Adrenal gland (tissue), 19 donors: ENCODE measurements at regions of chr12 and their contacts with region 1.

Region 1: DNA sequence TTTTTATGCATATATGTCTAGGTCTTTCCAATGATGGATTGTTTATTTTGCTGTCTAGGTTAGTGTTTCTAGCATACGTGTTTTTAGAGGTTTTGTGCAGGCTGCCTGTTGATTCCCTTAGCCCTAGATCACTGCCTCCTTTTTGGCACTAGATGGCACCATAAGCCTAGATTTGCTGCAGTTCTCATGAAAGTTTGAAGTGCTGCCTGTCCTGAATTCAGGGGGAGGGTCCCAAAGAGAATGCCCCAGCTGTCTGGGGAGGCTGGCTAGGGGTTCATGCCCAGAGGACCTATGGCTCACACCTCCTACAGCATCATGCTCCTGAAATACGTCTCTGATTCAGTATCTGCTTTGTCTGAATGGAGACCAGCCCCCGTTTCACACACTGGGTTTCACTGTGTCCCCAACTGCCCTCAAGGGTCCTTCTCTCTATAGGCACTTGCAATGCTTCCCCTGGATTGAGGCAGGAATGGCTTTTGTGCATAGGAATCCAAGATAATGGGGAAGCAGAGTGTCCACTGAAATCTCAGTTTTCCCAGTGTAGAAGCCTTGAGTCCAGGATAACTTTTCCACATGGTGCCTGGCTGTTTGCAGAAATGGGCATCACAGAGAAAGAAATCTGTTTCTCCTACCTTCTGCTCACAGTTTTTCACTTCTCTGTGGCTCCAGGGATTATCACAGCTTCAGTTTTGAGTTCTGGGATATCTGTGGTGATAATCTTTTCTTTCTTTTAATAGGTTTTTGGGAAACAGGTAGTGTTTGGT is 14.2 kb upstream of the TXNRD1 start:
- DNase-seq: peak in 6 of 7 donors; percentile 40 to 69 (median 50)
- H3K4me3 ChIP-seq: no peak overlapping the region
- H3K27ac ChIP-seq: no peak overlapping the region
- H3K4me1 ChIP-seq: no peaks in the 10 kb centered on the region
- H3K27me3 ChIP-seq: no peaks in the 10 kb centered on the region
- CTCF ChIP-seq: peak; percentile 37 to 93 (median 84)
- POLR2A ChIP-seq: no peak

Region 2: DNA sequence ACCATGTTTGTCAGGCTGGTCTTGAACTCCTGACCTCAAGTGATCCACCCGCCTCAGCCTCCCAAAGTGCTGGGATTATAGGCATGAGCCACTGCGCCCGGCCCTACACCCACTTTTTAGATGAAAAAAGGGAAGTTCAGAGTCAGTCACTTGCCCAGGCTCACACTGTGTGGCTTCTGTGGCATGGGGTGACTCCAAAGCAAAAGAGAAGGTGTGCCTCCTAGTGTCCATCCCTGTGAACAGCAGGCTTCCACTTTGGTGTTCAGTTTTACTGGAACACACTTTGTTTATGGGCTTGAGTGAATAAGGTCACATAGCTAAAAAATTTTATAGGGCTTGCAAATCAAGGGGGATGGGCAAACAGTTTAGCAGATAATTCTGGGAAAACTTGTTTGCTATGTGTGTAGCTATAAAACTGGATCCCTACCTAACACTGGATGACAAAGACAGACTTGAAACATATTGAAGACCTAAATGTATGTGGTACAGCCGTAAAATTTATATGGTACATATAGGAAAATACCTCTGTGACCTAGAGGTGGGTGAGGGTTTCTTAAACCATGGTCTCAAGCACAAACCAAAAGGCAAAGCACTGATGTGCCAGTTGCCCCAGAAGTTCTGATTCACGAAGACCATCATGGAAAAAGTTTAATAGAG is 157.1 kb after region 1 on chr12:
- intact Hi-C with region 1: loop called in 1 of 2 experiments (anchors 5 kb)
- DNase-seq: peak; percentile 61 to 89 (median 69)
- H3K4me3 ChIP-seq: no peak overlapping the region
- H3K27ac ChIP-seq: no peak overlapping the region
- H3K4me1 ChIP-seq: no peaks in the 10 kb centered on the region
- H3K27me3 ChIP-seq: no peaks in the 10 kb centered on the region
- CTCF ChIP-seq: peak; percentile 58 to 87 (median 82)
- POLR2A ChIP-seq: no peak

Region 3: DNA sequence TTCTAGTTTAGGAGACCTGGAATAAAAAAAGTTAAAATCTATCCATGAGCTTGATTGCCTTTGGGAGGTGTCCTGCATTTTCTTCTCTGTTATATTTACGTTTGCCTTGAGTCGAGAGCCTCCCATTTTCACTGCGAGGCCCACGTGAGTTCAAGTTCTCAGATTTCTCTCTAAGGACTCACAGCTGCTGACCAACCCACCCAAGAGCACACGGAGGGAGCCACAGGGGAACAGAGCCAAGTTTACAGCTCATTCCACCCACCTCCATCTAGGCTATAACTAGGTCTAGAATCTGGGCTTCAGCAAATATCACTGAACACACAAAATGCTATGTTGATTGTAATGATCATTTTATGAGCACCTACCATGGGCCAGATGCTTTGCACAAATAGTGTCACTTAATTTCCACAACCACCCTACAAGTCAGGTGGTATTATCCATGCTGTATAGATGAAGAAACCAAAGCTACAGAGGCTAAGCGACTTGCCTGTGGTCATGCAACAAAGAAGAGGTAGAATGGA is 866.2 kb after region 1 on chr12:
- intact Hi-C with region 1: loop called in 1 of 2 experiments (anchors 10 kb)
- DNase-seq: no peak
- H3K4me3 ChIP-seq: no peak overlapping the region
- H3K27ac ChIP-seq: no peak overlapping the region
- H3K4me1 ChIP-seq: no peaks in the 10 kb centered on the region
- H3K27me3 ChIP-seq: no peaks in the 10 kb centered on the region
- CTCF ChIP-seq: no peak
- POLR2A ChIP-seq: no peak